GM13977 (cell line): ENCODE measurements at regions of chr9 and their contacts with region 1.

Region 1: GRCh38 chr9:71285191-71285656 is 163.8 kb upstream of the TRPM3 start:
- DNase-seq: peak; percentile 22
- CTCF ChIP-seq: peak; percentile 89

Region 2: GRCh38 chr9:71223953-71224538 is 61.2 kb before region 1 on chr9:
- in situ Hi-C with region 1: no loop called
- DNase-seq: no peak
- CTCF ChIP-seq: no peak

Region 3: DNA sequence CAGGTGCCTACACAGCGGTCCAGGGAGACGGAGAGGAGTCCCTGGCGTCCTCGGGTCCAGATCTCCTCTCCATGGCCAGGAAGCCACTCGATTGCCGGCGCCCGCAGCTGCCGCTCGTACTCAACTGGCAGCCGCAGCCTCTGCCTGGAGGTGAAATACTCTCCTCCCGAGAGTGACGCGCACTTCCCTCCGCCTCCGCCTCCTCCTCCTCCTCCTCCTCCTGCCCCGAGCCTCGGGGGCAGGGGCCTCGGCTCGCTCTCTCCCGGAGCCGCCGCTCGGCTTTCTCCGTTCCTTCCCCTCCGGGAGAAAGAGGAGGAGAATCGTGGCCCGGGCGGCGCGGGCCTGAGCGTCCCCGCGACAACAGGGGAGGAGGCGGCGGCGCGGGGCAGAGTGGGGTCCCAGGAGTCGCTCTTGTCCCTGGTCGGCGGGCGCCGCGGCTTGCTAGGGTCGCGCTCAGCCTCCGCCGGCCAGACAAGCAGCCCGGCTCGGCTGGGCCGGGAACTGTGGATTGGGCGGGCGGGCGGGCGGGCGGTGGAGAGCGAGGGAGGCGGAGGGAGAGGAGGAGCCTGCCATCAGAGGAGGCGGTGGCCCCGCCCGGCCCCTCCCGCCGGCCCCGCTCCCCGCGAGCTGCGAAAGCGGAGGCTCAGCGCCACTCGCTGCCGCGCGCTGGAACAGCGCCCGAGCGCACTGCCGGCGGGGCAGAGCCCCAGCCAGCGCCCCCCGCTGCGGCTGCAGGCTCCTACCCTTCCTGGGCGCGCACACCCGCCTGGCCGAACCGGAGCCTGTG is 483.4 kb after region 1 on chr9 and contains the start of gene CEMIP2:
- in situ Hi-C with region 1: loop called (anchors 25 kb)
- DNase-seq: peak; percentile 89
- CTCF ChIP-seq: peak; percentile 78